Cardiac septum (tissue), 1 donor: ENCODE measurements at regions of chr12 and their contacts with region 1.

Region 1: DNA sequence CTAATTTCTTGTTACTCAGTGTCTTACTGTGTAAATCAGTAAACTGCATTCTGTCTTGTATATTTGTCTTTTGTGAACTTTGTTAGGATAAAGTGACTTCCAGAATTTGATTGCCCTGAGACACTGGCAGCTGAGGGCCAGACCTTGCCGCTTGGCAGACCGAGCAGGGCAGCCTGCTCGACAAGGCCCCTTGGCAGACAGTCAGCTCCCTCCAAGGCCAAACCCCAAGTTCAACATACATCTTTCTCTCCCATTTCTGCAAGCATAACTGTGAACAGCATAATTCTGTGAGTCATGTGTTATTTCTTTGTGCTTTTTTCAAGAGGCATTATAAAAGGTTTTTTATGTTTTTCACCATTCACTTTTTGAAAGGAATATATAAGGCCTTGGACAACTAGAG is 39.2 kb upstream of the BMAL2 start:
- DNase-seq: peak; percentile 75

Region 2: DNA sequence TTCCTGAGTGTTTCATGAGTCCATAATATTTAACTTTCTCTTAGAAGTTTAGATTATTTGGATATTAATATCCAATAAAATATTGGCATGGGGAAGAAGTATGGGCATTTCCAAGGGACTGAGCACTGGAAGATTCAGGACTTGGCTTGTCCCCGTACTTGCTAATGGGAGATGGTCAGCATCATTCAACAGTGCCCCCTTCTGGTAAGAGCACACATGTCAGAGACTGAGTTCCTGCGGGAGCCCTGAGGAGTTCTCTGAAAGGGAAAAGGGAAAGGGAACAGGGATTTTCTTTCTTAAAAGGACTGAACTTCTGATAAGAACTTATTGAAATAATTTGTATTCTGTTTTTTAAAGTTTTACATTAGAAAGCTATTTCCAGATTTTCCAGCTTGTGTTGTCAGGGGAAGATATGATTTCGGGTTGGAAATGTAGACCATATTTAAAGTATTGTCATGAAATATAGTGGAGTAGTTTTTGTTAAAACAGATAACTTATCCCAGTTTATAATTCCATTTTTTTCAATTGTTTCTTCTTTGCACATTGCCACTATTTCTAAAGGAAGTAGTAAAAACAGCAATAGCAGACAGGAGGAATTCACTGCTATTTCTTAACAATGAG is 151.3 kb before region 1 on chr12:
- intact Hi-C with region 1: loop called (anchors 5 kb)
- DNase-seq: no peak

Region 3: DNA sequence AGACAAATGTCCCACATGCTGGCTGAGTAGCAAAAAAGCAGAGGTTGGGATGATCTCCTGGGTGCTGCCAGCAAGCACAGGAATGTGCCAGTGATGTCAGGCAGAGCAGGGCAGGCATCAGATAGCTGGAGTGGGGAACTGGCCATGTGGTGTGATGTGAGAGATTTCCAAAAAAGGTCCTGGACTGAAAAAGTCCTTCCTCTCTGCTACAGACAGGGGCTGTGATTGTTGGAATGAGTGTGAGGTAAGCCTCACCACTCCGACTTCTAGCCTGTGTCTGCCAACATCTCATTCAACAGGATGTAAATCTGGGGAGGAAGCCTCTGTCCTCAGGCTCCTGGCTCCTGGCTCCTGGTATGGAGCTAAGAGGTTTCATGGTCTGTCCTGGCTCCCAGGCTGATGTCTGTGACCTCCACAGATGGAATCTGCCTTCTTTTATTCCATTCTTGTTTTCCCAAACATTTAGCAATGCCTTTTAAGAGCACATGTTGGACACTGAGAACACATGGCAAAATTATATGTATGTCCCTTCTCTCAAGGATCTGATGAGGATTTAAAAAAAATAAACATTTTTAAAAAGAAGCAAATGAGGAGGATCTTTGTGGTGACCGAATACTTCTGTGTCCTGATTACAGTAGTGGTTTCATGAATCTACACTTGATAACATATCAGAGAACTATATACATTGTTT is 99.5 kb before region 1 on chr12:
- intact Hi-C with region 1: loop called (anchors 5 kb)
- DNase-seq: peak; percentile 80